HEK293 (cell line): ENCODE measurements at regions of chr16 and their contacts with region 1.

Region 1: GRCh38 chr16:75420987-75421819 is 12.1 kb downstream of the CFDP1 start:
- H3K4me3 ChIP-seq: no peak overlapping the region
- H3K27ac ChIP-seq: 0 out of 2 replicates have a peak overlapping the region, but pooled peaks have one; percentile 20
- H3K4me1 ChIP-seq: peaks cover 12% of the 10 kb centered on the region
- CTCF ChIP-seq: no peak

Region 2: DNA sequence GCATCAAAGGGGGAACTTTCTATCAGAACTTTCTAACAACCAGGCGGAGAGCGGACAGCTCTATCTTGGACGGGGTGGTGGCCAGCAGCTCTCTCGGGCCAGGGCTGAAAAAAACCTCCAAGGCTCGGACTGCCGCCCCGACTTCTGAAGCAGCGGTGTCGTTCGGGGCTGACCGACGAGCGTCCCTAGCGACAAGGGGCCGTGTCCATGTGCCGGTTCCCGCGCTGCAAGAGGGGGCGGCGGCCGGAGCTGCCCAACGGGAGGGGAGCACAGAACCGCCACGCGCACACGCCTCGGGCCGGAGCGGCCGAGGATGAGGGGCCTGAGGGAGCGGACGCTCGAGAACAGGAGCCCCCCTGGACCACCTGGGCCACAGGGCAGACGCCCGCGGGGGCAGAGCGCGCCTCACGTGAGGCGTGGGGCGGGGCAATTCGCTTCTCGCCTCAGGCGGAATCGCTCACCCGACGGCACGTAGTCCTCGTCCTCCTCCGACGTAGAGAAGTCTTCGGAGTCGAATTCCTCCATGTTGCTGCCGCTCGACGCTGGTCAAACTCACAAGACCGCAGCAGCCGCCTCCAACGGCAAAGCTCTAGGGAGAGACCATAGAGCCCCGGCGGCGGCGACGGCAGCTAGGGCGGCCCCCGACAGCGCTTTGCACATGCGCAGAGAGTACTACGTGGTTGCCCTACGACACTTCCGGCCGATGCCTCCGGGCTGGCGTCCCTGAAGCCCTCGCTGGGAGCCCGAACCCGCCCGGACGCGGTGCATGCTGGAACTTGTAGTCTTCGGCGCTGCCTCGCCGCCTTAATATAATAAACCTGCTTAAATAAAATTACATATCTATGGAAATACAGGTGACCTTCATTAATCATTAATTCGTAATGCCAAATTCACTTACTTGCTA is 11.9 kb after region 1 on chr16 and contains the start of gene CFDP1:
- CTCF ChIA-PET with region 1: interaction called, 3 read pairs
- POLR2A ChIA-PET with region 1: interaction called, 10 read pairs
- H3K4me3 ChIP-seq: peak within 1 kb of the TSS; percentile 78
- H3K27ac ChIP-seq: peak within 1 kb of the TSS; percentile 73; the same call in 1 of the 2 replicates
- H3K4me1 ChIP-seq: no peaks in the 10 kb centered on the region
- CTCF ChIP-seq: peak; percentile 87

Region 3: GRCh38 chr16:75445298-75445697 is 24.1 kb after region 1 on chr16:
- CTCF ChIA-PET with region 1: no interaction called
- POLR2A ChIA-PET with region 1: no interaction called
- H3K4me3 ChIP-seq: no peak overlapping the region
- H3K27ac ChIP-seq: peak overlapping the region; percentile 17; the same call in 1 of the 2 replicates
- H3K4me1 ChIP-seq: peaks cover 10% of the 10 kb centered on the region
- CTCF ChIP-seq: no peak